Cardiac septum (tissue), 1 donor: ENCODE measurements at regions of chr17 and their contacts with region 1.

Region 1: GRCh38 chr17:80866147-80866793 is 125.4 kb upstream of the CHMP6 start:
- DNase-seq: no peak

Region 2: DNA sequence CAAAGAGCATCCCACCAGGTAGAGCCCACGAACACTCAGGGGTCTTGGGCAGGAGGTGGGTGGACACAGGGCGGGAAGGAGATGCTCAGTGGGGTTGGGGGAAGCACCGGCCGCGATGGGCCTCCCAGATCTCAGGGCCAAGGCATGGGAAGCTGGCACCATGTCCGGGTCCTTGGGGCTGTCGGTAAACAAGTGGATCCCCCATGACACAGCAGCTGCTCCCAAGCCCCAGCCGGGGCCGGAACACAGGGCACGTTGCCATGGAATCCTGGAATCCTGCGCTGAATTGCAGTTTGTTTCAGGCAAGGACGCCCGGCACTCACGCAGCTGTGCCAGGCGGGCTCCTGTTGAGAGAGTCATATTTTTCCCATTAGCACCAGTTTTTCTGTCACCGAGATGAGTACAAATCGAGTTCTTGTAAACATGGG is 102.3 kb after region 1 on chr17:
- intact Hi-C with region 1: loop called (anchors 5 kb)
- DNase-seq: no peak

Region 3: DNA sequence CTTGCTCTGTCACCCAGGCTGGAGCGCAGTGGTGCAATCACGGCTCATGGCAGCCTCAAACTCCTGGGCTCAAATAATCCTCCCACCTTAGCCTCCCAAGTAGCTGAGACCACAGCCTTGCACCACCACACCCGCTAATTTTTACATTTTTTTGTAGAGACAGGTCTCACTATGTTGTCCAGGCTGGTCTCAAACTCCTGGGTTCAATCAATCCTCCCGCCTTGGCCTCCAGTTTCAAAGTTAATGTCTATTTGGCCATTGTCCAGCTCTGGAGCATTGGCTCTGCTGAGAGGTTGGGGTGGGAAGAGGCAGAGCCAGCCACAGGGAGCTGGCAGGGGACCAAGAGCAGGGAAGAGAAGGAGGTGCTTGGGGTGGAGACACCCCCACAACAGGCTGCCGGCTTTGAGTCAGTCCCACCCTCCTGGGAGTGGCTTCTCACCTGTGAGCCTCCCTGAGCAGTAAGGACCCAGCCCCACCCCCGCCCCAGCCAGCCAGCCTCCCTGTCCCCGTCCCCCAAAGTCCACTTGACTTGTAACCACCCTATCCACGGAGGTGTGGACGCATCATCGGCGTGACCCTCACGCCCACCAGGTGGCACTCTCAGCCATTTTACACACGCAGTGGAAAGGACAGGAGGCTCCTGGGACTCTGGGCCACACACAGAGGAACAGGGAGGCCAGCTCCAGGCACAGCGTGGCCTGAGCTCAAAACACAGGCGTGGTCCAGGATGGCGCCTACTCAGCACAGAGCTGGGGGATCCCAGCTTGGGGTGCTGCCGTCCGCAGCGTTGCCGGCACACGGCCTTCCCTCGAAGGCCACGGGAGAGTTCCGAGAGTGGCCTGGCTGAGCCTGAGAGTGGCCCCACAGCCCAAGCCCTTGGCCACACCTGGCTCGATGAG is 276.3 kb after region 1 on chr17:
- intact Hi-C with region 1: no loop called
- DNase-seq: peak; percentile 87

Region 4: DNA sequence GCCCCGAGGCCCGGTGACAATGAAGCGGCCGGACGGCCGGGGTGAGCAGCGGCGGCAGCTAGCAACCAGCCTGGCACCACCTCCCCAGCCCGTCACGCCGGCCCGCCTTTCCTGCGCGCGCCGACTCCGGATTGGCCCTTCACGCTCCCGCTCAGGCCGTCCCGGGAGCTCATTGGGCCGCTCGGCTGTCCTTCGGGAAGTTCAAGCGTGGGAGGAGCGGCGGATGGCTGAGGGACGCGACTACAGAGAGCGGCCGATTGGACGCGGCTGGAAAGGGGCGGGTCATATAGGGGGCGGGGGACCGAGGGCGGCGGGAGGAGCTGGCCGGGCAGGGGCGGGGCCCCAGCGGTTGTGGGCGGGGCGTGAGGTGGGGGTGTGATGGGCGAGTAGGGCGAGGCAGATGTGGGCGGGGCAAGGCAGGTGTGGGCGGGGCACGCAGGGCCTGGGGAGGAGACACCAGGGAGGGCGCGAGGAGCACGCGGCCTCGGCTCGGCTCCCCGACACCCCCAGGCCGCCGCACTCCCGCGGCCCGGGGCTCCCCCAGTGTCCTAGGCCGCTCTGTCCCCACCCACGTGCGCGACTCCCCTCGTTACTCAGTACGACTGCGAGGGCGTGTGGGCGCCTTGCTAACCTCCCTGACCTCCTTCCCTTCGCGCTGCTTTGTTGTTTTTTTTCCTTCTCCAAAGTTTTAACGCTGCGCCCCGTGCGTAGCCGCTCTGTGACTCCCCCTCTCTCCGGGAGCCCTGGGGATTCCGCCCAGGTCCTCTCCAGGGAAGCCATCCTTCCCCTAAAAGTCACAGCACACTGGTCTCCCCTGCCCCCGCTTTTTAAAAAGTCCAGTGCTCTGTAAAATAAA is 356.9 kb after region 1 on chr17 and contains the start of gene CEP131:
- intact Hi-C with region 1: no loop called
- DNase-seq: peak; percentile 100
- total RNA-seq, gene CEP131: 6.8 TPM